Astrocyte of the cerebellum (primary cell): ENCODE measurements at regions of chr2 and their contacts with region 1.

Region 1: GRCh38 chr2:241096979-241097378 is 5.1 kb downstream of the MTERF4 start:
- DNase-seq: no peak
- H3K4me3 ChIP-seq: no peak overlapping the region
- CTCF ChIP-seq: no peak

Region 2: GRCh38 chr2:241139531-241140444 is 42.8 kb after region 1 on chr2:
- in situ Hi-C with region 1: loop called (anchors 5 kb)
- DNase-seq: no peak
- H3K4me3 ChIP-seq: no peak overlapping the region
- CTCF ChIP-seq: no peak

Region 3: DNA sequence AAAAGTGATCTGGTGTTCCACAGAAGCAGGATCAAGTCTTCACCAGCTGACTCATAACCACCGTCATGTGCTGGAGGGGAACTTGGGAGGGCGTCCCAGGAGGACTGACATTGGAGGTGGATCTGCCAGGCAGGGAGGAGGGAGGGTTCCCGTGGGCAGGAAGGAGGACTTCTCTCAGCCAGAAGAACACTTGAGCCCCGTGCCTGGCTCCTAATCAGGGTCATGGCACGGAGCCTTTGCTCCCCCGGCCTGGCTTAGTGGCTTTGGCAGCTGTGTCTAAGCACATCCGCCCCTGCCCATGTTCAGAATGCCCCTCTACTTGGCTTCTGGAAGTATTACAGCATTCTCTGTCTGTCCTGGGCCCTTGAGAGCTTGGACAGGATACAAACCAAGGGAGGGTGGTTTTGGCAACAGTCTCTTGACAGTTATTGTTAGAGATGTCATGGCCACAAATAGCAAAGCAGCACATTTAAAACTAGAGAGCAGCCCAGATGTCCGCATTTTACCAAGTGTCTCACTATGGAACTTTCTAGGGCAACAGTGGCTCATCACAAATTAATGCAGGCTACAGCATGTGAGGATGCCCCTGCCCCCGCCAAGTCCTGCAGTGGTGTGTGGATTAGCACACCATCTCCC is 64.8 kb after region 1 on chr2:
- in situ Hi-C with region 1: no loop called
- DNase-seq: peak; percentile 82
- H3K4me3 ChIP-seq: no peak overlapping the region
- CTCF ChIP-seq: no peak